PC-9 (cell line): ENCODE measurements at regions of chr10 and their contacts with region 1.

Region 1: DNA sequence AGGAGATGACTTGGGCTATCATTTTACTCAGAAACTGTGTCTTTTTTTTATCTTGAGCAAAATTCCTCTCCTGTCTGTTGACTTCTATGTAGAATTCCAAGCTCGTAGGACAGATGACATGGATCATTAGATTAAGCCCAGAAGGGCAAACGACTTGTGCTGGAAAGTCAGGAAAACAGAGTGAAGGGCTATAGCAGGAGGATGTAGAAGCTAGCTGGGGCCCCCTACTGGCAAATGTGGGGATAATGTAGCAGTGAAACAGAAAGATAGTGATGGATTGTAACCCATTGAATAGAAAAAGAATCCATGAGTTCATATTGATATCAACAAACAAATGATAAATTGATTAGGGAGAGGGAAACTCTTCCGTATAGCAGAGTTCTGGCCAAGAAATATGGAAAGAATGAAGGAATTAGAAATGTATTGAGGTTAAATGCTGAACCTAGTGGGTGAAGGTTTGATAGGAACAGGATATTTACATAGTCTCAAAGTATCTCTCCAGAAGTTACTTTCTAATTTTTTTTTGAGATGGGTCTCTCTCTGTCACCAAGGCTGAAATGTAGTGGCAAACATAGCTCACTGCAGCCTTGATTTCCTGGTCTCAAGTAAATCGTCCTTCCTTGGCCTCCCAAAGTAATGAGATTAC is 103.6 kb downstream of the LYZL1 start:
- DNase-seq: peak in 1 of 2 experiments; percentile 33
- H3K4me3 ChIP-seq: no peak overlapping the region
- H3K27ac ChIP-seq: no peak overlapping the region
- H3K4me1 ChIP-seq: no peaks in the 10 kb centered on the region
- H3K27me3 ChIP-seq: peaks cover 4% of the 10 kb centered on the region; the same call in 1 of the 2 replicates
- CTCF ChIP-seq: peak; percentile 80

Region 2: GRCh38 chr10:28628184-28628893 is 764.2 kb before region 1 on chr10:
- CTCF ChIA-PET with region 1: no interaction called
- POLR2A ChIA-PET with region 1: interaction called, 3 read pairs
- intact Hi-C with region 1: loop called (anchors 2 kb)
- DNase-seq: peak; percentile 51 to 74
- H3K4me3 ChIP-seq: no peak overlapping the region
- H3K27ac ChIP-seq: no peak overlapping the region
- H3K4me1 ChIP-seq: peaks cover 7% of the 10 kb centered on the region; the same call in 1 of the 2 replicates
- H3K27me3 ChIP-seq: no peaks in the 10 kb centered on the region
- CTCF ChIP-seq: peak; percentile 91

Region 3: DNA sequence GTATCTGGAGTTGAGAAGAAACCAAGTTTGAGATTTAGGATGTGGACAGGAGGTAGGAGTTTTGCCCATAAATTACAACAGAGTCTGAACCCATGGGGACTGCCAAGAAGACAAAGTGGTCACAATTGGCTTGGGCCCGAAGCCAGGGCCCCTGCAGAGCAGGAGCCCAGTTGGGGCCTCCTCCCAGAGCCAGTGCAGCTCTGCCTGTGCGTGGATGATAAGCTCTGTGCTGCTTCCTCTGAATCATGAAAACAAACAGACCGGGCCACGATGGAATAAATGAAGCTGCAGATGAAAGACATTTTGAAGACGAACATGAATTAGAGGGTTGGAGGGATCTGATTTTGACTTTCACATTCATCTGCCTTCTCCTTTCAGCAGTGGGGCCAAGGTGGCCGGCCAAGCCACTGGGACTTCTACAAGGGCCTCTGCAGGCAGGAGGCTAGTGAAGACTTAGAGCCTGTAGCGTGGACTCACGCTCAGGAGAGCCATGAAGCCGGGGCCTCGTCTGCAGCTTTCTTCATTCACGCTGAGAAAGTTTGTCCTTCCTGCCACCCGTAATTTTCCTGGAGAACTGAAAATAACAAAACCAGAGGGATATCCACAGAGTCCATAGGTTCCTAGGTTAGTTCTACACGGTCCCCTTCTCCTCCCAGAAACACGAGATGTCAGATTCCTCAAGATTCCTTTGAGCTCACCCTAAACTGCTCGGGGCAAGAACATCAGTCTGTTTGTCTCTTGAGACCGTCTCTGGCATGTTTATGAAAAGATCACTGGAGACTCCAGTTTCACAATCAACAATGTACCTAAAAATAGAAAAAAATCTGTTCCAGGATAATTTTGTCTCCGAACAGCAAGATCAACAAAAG is 260.3 kb before region 1 on chr10:
- CTCF ChIA-PET with region 1: no interaction called
- POLR2A ChIA-PET with region 1: no interaction called
- intact Hi-C with region 1: loop called (anchors 2 kb)
- DNase-seq: no peak
- H3K4me3 ChIP-seq: no peak overlapping the region
- H3K27ac ChIP-seq: no peak overlapping the region
- H3K4me1 ChIP-seq: no peaks in the 10 kb centered on the region
- H3K27me3 ChIP-seq: no peaks in the 10 kb centered on the region
- CTCF ChIP-seq: no peak

Region 4: GRCh38 chr10:29204070-29204800 is 188.3 kb before region 1 on chr10:
- CTCF ChIA-PET with region 1: interaction called, 12 read pairs
- POLR2A ChIA-PET with region 1: no interaction called
- intact Hi-C with region 1: no loop called
- DNase-seq: no peak
- H3K4me3 ChIP-seq: no peak overlapping the region
- H3K27ac ChIP-seq: no peak overlapping the region
- H3K4me1 ChIP-seq: no peaks in the 10 kb centered on the region
- H3K27me3 ChIP-seq: no peaks in the 10 kb centered on the region
- CTCF ChIP-seq: no peak

Region 5: DNA sequence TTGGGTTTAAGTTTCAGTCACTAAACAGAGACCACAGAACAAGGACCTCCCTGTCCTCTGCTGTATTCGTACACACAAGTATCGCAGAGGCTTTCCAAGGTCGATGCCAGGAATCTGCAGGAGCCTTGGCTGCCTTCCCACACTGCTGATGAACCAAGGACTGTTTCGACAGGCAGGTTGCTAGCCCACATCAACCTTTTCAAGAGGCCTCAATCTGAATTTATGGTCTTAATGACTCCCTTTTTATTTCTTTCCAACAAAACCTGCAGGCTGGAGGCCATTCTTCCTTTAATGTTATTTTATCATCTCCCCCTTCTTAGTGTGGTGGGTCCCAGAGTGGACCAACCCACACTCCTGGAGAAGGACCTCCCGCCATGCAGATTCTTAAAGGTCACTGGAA is 621.3 kb after region 1 on chr10:
- CTCF ChIA-PET with region 1: no interaction called
- POLR2A ChIA-PET with region 1: no interaction called
- intact Hi-C with region 1: no loop called
- DNase-seq: no peak
- H3K4me3 ChIP-seq: no peak overlapping the region
- H3K27ac ChIP-seq: no peak overlapping the region
- H3K4me1 ChIP-seq: no peaks in the 10 kb centered on the region
- H3K27me3 ChIP-seq: no peaks in the 10 kb centered on the region
- CTCF ChIP-seq: no peak